Activated CD8-positive, alpha-beta T cell treated with anti-CD3 and anti-CD28 coated beads for 36 hours (primary cell): ENCODE measurements at regions of chr20 and their contacts with region 1.

Region 1: DNA sequence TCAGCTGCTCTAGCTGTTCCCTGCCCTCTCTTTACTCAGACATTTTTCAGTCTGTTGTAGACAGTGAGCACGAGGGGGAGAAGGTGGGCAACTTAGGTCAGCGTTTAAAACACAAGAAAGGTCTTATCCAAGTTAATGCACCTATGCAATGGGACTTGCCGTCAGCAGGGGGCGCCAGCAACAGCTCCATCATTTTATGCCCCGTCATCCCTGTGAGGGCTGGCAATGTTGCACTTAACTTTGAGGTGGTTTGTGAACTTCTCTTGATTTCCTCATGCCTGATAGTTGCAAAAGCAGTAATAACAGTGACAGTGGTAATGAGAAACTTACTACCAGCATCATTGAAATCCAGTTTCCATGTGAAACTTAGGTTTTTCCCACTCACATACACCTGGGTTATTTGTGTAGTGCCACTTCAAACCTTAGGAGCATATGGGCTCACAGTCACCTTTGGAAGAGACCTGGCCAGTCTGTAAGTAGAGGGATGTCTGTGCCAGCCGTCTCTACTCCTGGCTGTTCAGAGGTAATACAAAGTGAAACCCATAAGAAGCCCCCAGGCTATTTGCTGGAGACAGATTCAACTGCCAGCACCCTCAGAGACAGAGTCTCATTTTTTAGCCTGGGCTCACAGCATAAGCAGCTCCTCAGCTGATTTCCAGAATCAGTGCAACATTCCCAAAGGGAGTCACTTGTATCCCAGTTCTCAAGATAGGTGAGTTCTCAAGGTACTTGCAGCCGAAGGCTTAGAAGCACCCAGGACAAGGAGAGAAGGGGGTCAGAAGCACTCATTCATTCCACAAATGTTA is 44.8 kb upstream of the ID1 start:
- DNase-seq: peak; percentile 88
- ATAC-seq: peak; percentile 80
- H3K4me3 Mint-ChIP-seq: no peak overlapping the region
- H3K27ac Mint-ChIP-seq: peak overlapping the region; percentile 76
- H3K4me1 Mint-ChIP-seq: peaks cover 22% of the 10 kb centered on the region
- H3K27me3 Mint-ChIP-seq: no peaks in the 10 kb centered on the region
- CTCF ChIP-seq: peak; percentile 95

Region 2: GRCh38 chr20:31617432-31618104 is 57.3 kb after region 1 on chr20:
- CTCF ChIA-PET with region 1: interaction called, 1,008 read pairs
- POLR2A ChIA-PET with region 1: interaction called, 9 read pairs
- intact Hi-C with region 1: no loop called
- DNase-seq: no peak
- ATAC-seq: no peak
- H3K4me3 Mint-ChIP-seq: no peak overlapping the region
- H3K27ac Mint-ChIP-seq: no peak overlapping the region
- H3K4me1 Mint-ChIP-seq: peaks cover 5% of the 10 kb centered on the region
- H3K27me3 Mint-ChIP-seq: peaks cover 1% of the 10 kb centered on the region
- CTCF ChIP-seq: no peak

Region 3: GRCh38 chr20:31901615-31902014 is 341.3 kb after region 1 on chr20:
- CTCF ChIA-PET with region 1: no interaction called
- POLR2A ChIA-PET with region 1: no interaction called
- intact Hi-C with region 1: no loop called
- DNase-seq: no peak
- ATAC-seq: no peak
- H3K4me3 Mint-ChIP-seq: no peak overlapping the region
- H3K27ac Mint-ChIP-seq: no peak overlapping the region
- H3K4me1 Mint-ChIP-seq: no peaks in the 10 kb centered on the region
- H3K27me3 Mint-ChIP-seq: peaks cover 3% of the 10 kb centered on the region
- CTCF ChIP-seq: no peak